ENCODE measurements at regions of chr9 and their contacts with region 1.

Region 1: GRCh38 chr9:114033397-114034103 is 44.5 kb downstream of the AMBP start:
- DNase-seq: peak in 2 of 4 donors; percentile 5 to 33
- ATAC-seq: peak; percentile 60
- H3K4me3 ChIP-seq: no peak overlapping the region
- H3K27ac ChIP-seq: no peak overlapping the region
- H3K4me1 ChIP-seq: no peaks in the 10 kb centered on the region
- H3K27me3 ChIP-seq: no peaks in the 10 kb centered on the region
- CTCF ChIP-seq: peak; percentile 35 to 36

Region 2: GRCh38 chr9:113737517-113738271 is 295.9 kb before region 1 on chr9:
- intact Hi-C with region 1: loop called in 1 of 2 experiments (anchors 10 kb)
- DNase-seq: peak in 2 of 4 donors; percentile 54 to 67
- ATAC-seq: peak; percentile 84
- H3K4me3 ChIP-seq: no peak overlapping the region
- H3K27ac ChIP-seq: no peak overlapping the region
- H3K4me1 ChIP-seq: no peaks in the 10 kb centered on the region
- H3K27me3 ChIP-seq: peaks cover 3 to 9% of the 10 kb centered on the region in 2 donors
- CTCF ChIP-seq: peak; percentile 55 to 74

Region 3: DNA sequence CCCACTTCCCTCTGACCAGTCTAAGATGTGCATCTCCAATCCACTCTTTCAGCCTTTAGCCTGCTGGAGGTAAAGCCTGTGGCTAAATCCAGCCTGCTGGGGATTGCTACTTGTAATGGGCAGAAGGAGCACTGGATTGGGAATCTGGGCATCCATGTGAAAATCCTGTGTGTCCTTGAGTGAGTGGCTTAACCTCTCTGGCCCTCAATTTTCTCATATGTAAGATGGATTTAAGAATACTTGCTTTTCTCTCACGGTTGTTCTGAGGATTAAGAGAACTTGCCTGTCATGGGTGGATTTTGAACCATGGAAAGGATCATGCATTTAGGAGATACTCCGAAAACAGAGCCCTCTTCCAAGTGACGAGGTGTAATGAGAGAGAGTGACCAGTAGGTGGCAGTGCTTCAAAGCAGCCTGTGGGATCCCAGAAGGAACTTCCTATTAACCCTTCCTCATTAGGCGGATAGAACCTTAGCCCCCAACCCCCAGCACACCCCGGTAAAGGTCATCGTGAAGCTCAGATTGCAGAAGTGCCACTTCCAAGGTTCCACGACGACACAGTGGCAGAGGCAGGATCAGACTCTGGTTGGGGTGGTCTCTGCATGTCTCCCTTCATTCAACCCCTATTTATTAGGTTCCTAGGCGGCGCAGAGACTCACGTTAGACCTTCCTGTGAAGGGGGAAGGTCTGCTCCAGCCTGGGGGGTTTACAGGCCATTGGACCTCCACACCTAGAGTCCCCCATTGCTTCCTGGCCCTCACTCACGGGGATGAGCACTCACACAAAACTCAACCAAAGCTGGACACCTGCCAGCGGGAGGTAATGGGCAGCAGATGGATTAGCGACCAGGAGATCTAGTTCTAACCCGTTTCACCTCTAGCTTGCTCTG is 226.1 kb before region 1 on chr9:
- intact Hi-C with region 1: loop called in 1 of 2 experiments (anchors 10 kb)
- DNase-seq: peak in 2 of 4 donors; percentile 60 to 66
- ATAC-seq: peak; percentile 95
- H3K4me3 ChIP-seq: no peak overlapping the region
- H3K27ac ChIP-seq: no peak overlapping the region
- H3K4me1 ChIP-seq: peaks cover 0 to 10% of the 10 kb centered on the region in 2 donors
- H3K27me3 ChIP-seq: no peaks in the 10 kb centered on the region
- CTCF ChIP-seq: peak; percentile 85 to 89

Measured in left lung (tissue), 14 donors.